Lower leg skin (tissue), 4 donors: ENCODE measurements at regions of chr15 and their contacts with region 1.

Region 1: GRCh38 chr15:63630036-63630751 is 33.0 kb downstream of the FBXL22 start:
- DNase-seq: no peak
- H3K4me3 ChIP-seq: no peak overlapping the region
- CTCF ChIP-seq: no peak
- POLR2A ChIP-seq: no peak

Region 2: GRCh38 chr15:62649793-62650420 is 980.3 kb before region 1 on chr15:
- intact Hi-C with region 1: loop called (anchors 5 kb)
- DNase-seq: no peak
- H3K4me3 ChIP-seq: no peak overlapping the region
- CTCF ChIP-seq: no peak
- POLR2A ChIP-seq: no peak

Region 3: GRCh38 chr15:63615935-63616334 is 14.3 kb before region 1 on chr15:
- intact Hi-C with region 1: no loop called
- DNase-seq: no peak
- H3K4me3 ChIP-seq: no peak overlapping the region
- CTCF ChIP-seq: no peak
- POLR2A ChIP-seq: no peak